Head of caudate nucleus (tissue), 42 donors: ENCODE measurements at regions of chr12 and their contacts with region 1.

Region 1: GRCh38 chr12:118372541-118373495 is at the start of gene TAOK3:
- DNase-seq: peak; percentile 93 to 100 (median 99)

Region 2: DNA sequence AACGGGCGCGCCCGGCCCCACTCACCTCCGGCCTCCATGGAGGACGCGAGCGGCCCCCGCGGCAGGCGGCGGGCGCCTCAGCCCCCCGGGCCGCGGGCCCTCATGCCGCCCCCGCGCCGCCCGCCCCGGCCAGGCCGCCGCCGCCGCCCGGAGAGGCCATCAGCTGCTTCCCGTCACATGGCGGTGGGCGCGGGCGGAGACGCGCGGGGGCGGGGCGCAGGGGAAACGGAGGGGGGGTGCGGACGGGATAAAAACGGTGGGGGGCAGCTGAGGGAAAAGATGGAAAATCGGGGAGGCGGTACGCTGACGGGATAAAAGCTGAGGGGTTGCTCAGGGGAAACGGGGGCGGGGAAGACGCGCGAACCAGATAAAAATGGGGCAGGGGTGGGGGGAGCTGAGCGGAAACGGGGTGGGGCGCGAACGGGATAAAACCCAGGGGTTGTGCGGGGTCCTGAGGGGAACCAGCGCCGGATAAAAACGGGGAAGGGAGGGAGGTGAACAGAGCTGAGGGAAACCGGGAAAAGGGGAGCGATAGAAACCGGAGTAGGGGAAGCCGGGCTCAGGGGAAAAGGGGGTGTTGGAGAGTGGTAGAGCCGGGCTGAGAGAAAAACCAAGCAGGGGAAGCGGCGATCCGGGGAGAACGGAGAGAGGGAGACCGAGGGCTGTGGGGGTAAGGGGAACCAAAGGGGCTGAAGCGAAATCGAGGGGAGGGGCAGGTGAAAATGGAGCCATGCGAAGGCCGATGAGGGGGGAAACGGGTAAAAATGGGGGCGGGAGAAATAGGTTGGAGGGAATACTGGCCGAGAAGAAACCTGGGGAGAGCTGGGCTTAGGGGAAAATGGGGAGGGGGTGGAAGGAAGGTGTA is 311.6 kb before region 1 on chr12 and contains the start of gene WSB2:
- intact Hi-C with region 1: loop called (anchors 5 kb)
- DNase-seq: peak; percentile 53 to 94 (median 87)

Region 3: GRCh38 chr12:118120579-118121363 is 252.0 kb before region 1 on chr12:
- intact Hi-C with region 1: loop called (anchors 5 kb)
- DNase-seq: peak; percentile 61 to 93 (median 80)

Region 4: DNA sequence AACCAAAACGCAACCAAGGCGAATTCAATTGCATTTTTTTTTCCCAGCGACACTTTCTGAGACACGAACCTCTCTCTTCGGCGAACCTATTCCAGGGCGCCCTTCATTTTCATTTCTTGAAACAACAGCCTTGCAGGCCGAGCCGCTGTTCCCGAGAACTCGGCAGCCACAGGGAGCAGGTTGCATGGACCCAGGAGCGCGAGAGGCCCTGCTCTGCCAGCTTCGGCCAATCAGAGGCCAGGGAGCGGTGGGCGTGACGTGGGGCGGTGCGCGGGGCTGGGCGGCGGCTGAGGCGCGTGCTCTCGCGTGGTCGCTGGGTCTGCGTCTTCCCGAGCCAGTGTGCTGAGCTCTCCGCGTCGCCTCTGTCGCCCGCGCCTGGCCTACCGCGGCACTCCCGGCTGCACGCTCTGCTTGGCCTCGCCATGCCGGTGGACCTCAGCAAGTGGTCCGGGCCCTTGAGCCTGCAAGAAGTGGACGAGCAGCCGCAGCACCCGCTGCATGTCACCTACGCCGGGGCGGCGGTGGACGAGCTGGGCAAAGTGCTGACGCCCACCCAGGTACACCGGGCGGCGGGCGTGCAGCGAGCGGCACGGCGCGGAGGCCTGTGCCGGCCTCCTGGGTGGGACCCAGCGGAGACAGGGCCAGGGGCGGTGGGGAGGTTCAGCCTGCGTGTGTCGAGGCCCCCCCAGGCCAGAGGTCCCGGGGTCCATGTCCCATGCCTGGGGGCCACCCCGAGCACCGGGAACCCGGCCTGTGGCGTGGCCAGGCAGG is 236.8 kb before region 1 on chr12 and contains the start of gene PEBP1:
- intact Hi-C with region 1: loop called (anchors 5 kb)
- DNase-seq: peak; percentile 95 to 99 (median 99)

Region 5: DNA sequence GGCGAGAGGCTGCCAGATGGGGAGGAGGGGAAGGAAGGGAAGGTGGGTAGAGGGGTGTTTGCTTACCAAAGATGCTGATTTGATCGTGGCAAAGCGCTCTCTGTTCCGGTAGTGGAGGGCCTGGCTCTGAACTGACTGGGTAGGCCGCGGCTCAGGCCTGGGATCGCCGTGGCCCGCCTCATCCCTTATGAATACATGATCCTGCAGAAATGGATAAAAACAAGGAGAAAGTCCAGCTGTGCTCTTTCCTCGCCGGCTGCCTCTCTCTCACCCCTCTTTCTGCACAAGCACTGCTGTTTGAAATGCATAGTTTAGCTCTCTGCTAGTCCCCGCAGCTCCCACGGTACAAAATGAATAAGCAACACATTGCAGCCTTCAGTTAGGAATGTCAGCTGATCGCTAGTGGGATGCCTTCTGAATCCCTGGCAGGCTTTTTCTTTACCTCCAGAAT is 183.1 kb before region 1 on chr12:
- intact Hi-C with region 1: loop called (anchors 2 kb)
- DNase-seq: peak; percentile 35 to 83 (median 67)

Region 6: DNA sequence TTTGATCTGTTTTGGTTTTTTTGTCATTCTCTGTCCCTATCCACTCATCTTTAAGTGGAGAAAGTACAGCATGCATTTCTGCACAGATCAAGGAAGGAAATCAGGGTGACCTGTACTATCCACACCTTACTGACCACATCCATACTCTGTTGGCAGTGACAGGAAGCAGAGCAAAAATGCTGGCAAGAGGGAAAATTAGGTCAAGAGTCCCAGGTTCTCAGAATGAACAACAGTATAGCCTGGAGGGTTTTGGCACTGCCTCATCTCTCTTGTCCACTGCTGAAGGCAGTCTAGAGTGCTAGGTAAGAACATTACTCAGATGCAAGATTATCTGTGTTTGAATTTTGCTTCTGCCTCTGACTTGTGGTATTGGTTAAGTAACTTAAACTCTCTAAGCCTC is 70.8 kb before region 1 on chr12:
- intact Hi-C with region 1: loop called (anchors 5 kb)
- DNase-seq: no peak

Region 7: DNA sequence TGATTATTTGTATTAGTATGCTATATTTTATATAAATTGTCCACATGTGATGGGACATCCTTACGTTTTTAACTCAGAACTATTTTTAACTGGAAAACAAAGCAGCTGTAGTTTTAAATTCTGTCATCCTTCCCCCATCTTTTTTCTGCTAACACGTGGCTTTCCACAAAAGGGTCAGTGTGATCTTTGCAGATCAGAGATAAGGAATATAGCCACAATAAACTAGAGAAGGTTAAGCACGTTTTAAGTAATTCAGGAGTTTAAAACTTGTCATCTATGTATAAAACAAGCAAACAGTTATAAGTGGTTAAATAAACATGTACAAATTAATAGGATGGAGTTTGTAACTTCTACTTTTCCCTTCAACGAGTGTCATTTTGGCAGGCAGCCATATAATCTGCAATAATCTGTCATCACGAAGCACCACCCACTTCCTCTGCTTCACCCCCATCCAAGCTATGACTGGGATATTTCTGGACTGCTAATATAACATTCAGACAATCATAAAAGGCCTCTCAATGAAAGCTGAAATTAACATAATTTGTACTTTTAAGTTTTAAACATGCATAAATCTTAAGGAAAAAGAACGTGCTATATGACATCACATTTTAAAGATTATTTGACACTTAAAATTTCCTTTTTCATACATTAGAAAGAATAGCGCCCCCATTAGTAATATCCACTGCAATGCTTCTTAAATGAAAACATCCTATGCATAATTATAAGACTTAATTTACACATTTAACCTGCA is 15.4 kb before region 1 on chr12:
- intact Hi-C with region 1: no loop called
- DNase-seq: peak in 17 of 42 donors; percentile 12 to 81 (median 48)